ENCODE measurements at regions of chr21 and their contacts with region 1.

Region 1: GRCh38 chr21:36028127-36029069 is 31.9 kb downstream of the SETD4 start:
- DNase-seq: peak; percentile 64 to 81 (median 79)
- H3K4me3 ChIP-seq: no peak overlapping the region
- H3K27ac ChIP-seq: no peak overlapping the region
- H3K4me1 ChIP-seq: peaks cover 1% of the 10 kb centered on the region
- H3K27me3 ChIP-seq: no peaks in the 10 kb centered on the region
- CTCF ChIP-seq: peak; percentile 82 to 85 (median 83)
- EP300 ChIP-seq: no peak
- POLR2A ChIP-seq: no peak

Region 2: GRCh38 chr21:34693192-34693810 is 1335.1 kb before region 1 on chr21:
- intact Hi-C with region 1: loop called in 1 of 4 experiments (anchors 10 kb)
- DNase-seq: peak in 1 of 5 donors; percentile 18
- H3K4me3 ChIP-seq: no peak overlapping the region
- H3K27ac ChIP-seq: no peak overlapping the region
- H3K4me1 ChIP-seq: no peaks in the 10 kb centered on the region
- H3K27me3 ChIP-seq: no peaks in the 10 kb centered on the region
- CTCF ChIP-seq: peak; percentile 12 to 39 (median 36)
- EP300 ChIP-seq: no peak
- POLR2A ChIP-seq: no peak

Region 3: DNA sequence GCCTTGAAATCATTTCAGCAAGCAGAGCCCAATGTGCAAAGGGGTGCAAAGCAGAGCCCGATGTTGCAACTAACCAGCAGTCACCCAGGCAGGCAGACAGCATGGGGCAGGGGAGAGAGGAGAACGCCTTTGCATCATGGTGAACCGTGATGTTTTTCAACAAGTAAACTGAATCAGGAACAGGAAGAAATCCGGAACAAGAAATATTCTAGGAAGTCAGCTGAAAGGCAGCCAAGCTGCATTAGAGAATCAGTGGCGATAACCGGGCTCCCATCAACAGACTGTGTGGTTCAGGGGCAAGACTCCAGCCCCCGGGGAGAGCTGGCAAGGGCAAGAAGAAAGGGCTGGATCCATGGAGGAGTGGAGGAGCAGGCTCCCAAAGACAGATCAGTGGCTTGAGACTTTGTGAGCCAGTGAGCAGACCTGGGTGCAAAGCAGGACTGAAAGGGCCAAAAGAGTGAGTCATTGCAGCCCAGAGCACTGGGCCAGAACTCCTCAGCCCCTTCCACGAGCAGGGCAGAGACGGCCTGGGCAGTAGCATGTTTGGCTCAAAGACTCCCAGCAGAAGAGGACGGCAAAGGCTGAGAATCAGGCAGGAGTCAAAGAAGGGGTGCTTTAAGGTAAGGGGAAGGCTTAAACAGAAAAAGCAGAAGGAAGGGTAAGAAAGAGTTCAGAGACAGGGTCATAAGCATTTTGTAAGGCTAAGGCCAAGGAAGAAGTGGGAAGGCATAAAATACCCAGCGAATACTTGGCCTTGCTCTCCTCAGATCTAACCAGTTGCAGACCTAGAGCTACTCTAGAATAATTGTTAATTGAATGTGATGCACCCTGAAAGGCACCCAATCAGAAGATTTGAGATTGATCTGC is 123.1 kb before region 1 on chr21:
- intact Hi-C with region 1: no loop called
- DNase-seq: peak in 1 of 5 donors; percentile 18
- H3K4me3 ChIP-seq: no peak overlapping the region
- H3K27ac ChIP-seq: no peak overlapping the region
- H3K4me1 ChIP-seq: peaks cover 5% of the 10 kb centered on the region
- H3K27me3 ChIP-seq: no peaks in the 10 kb centered on the region
- CTCF ChIP-seq: no peak
- EP300 ChIP-seq: no peak
- POLR2A ChIP-seq: no peak

Region 4: DNA sequence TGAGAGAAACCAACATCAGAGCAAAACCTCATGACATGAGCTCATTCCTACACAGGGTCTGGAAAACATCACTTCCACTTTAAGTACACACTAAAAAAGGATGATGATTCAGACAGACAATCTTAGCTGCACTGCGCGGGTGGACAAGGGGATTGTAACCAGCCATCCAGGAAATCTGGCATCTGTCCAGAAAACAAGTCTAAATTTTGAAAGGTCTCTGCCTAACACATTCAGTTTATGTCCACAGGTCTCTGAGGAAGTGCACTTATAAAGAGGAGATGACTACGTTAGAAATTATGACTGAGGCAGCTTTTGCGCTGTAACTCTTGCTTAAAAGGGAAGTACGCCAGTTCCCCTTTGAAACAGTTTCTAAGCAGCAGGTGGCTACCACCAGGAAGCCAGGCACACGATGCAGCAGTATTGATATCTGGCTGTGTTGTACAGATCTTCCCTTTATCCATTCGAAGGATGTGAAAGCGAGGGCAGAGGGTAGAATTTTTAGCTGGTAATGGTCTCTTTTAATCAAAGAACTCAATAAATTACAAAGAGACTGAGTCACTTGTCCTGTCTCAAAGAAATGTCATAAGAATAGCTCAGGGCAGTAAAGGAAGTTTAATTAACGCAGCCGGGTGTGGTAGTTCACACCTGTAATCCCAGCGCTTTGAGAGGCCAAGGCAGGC is 96.0 kb before region 1 on chr21:
- intact Hi-C with region 1: loop called in 1 of 4 experiments (anchors 5 kb)
- DNase-seq: peak in 4 of 5 donors; percentile 24 to 37 (median 27)
- H3K4me3 ChIP-seq: no peak overlapping the region
- H3K27ac ChIP-seq: no peak overlapping the region
- H3K4me1 ChIP-seq: peaks cover 6% of the 10 kb centered on the region
- H3K27me3 ChIP-seq: no peaks in the 10 kb centered on the region
- CTCF ChIP-seq: no peak
- EP300 ChIP-seq: no peak
- POLR2A ChIP-seq: no peak

Region 5: DNA sequence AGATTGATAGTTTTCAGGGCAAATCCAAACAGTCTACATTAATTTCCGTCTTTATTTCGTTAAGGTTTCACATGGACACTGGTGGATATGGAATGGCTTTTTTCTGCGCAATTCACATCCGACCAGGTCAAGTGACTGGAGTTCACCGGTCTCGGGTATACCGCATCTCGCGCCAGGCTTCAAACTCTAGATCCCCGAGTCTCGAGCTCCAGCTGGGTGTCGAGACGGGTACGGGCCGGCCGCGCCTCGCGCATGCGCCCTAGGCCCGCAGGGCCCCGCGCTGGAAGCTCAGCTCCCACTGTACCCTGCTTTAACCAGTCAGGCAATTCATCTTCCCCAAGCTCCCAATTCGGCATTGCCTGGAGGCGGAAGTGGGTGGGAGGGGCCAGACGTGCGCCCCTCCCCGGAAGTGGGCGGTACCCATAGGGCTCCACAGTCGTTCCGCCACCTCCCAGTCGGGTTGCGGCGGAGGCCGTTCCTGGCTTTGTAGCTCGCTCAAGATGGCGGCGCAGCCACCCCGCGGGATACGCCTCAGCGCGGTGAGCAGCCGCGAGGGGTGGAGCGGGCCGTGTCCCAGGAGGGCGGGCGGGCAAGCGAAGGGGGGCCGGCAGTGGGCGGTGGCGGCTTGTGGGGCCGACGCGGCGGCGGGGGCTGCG is 291.5 kb after region 1 on chr21 and contains the start of gene MORC3:
- intact Hi-C with region 1: no loop called
- DNase-seq: peak; percentile 97 to 99 (median 98)
- H3K4me3 ChIP-seq: peak within 1 kb of the TSS; percentile 96
- H3K27ac ChIP-seq: peak within 1 kb of the TSS; percentile 89 to 99
- H3K4me1 ChIP-seq: peaks cover 7% of the 10 kb centered on the region
- H3K27me3 ChIP-seq: no peaks in the 10 kb centered on the region
- CTCF ChIP-seq: no peak
- EP300 ChIP-seq: no peak
- POLR2A ChIP-seq: peak; percentile 84
- total RNA-seq, gene MORC3: 35.4 to 55.6 (median 39.1) TPM

Measured in ovary (tissue), 10 donors.